OCI-LY7 (cell line): ENCODE measurements at regions of chr1 and their contacts with region 1.

Region 1: GRCh38 chr1:43616383-43616782 is 33.6 kb upstream of the KDM4A start:
- DNase-seq: no peak
- H3K4me3 ChIP-seq: no peak overlapping the region
- H3K27ac ChIP-seq: no peak overlapping the region
- H3K4me1 ChIP-seq: no peaks in the 10 kb centered on the region
- CTCF ChIP-seq: no peak

Region 2: DNA sequence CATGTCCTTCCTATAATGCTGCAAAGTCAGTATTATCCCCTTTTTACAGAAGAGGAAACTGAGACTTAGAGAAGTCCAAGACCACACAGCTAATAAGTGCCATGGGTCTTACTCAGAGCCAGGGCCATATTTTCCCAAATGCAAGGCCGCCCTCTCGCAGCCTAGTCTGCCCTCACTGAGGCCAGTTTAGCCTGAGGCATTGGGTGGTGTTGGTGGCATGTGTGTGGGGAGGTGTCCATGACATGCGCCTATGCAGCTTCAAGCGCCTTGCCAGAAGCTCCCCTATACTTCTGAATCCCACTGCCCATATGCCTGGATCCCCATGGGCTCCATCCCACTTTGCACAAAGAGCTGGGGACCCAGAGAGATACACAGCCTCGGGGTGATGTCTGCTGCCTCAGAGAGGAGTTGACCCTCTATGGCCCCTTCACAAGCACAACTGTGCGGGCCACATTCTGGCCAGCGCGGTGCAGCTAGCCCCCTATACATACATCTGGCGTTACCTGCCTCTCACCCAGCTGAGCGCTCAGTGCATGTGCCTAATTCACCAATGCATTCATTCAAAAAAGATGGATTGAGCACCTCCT is 95.4 kb before region 1 on chr1:
- CTCF ChIA-PET with region 1: interaction called, 10 read pairs
- POLR2A ChIA-PET with region 1: no interaction called
- intact Hi-C with region 1: no loop called
- DNase-seq: no peak
- H3K4me3 ChIP-seq: no peak overlapping the region
- H3K27ac ChIP-seq: no peak overlapping the region
- H3K4me1 ChIP-seq: no peaks in the 10 kb centered on the region
- CTCF ChIP-seq: no peak